ENCODE measurements at regions of chr2 and their contacts with region 1.

Region 1: DNA sequence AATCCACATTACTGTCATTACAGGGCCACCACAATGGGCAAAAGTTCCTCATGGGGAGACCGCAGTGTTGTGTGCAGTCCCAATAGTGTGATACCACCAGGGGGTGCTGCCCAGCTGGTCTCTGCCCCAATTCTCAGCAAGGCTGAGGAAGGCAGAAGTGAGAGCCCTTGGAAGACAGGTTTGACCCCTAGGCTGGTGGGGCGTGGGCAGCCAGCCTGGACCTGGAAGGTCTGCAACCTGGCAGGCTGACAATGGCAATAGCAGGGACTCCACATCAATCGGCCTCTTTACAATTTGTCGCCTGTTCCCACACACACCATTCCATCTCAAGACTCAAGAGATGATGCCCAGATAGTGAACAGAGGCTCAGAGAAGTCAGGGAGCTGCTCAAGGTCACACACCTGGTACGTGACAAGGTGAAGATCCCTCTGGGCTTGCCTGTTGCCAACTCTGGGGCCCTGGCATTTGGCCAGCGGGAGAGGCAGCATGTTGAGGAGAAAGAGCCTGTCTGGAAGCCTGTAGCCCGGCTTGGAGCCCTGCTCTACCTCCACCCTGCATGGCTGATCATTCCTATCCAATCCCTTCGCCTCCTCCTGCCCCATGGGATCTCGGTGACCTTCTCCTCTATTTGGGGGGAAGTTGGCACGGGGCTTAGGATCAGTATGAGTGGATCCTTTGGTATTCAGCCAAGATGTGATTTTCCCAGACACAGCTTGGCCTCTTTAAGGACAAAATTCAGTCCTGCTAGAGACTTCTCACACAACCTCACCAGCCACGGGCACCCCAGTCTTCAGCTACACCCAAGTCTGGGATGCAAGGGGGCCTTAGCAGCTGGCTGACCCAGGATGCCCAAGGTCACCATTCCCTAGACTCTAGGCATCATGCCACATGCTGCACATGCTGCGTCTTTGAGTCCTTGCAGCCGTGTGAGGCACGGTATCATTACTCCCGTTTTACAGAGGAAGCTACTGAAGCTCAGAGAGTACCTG is 2.9 kb upstream of the ATOH8 start:
- DNase-seq: peak; percentile 77
- ATAC-seq: peak; percentile 66
- H3K4me3 Mint-ChIP-seq: no peak overlapping the region
- H3K27ac Mint-ChIP-seq: no peak overlapping the region
- H3K4me1 Mint-ChIP-seq: peaks cover 13% of the 10 kb centered on the region
- H3K27me3 Mint-ChIP-seq: peaks cover 45% of the 10 kb centered on the region

Region 2: GRCh38 chr2:85804583-85804982 is 53.7 kb after region 1 on chr2:
- CTCF ChIA-PET with region 1: interaction called, 6 read pairs
- POLR2A ChIA-PET with region 1: no interaction called
- intact Hi-C with region 1: loop called in 1 of 2 experiments (anchors 2 kb)
- DNase-seq: peak; percentile 46
- ATAC-seq: peak; percentile 63
- H3K4me3 Mint-ChIP-seq: no peak overlapping the region
- H3K27ac Mint-ChIP-seq: no peak overlapping the region
- H3K4me1 Mint-ChIP-seq: peaks cover 9% of the 10 kb centered on the region
- H3K27me3 Mint-ChIP-seq: no peaks in the 10 kb centered on the region

Measured in activated CD4-positive, alpha-beta T cell treated with anti-CD3 and anti-CD28 coated beads for 36 hours (primary cell).